Activated CD4-positive, alpha-beta T cell treated with anti-CD3 and anti-CD28 coated beads, Interleukin-2, amount 10 ng/mL, durations not matched to agents 24 days and 14 days (primary cell): ENCODE measurements at regions of chr11 and their contacts with region 1.

Region 1: DNA sequence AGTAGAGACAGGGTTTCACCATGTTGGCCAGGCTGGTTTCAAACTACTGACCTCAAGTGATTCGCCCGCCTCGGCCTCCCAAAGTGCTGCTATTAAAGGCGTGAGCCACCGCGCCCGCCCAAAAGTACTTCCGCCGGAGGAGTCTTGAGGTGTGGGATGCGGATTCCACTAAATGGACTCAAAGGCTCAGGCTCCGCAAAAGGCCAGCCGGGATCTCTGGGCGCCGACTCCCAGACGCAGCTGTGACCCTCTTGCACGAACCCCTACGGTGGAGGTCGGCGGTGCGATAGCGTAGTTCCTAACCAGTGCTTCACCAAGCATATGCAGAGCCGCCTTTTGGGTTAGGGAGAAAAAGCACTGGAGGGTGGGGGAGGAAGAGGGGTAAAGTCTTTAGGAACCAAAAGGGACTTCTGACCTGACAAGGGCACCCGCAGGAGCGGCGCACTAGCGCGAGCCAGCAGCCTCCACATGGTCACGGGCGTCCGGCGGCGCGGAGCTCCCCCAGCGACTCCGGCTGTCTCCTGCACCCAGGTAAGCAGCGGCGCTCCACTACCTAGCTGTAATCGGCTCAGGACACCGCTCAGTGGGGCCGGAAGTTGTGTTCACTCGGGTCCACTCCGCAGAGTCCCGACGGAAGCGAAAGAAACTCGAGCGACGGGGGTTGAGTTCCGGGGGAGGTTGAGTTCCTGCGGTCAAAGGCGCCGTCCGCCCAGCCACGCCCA is at the start of gene MRPL16:
- DNase-seq: peak; percentile 95
- H3K4me3 Mint-ChIP-seq: peak within 1 kb of the TSS; percentile 92
- H3K27ac Mint-ChIP-seq: peak within 1 kb of the TSS; percentile 91
- H3K4me1 Mint-ChIP-seq: peaks cover 22% of the 10 kb centered on the region
- H3K27me3 Mint-ChIP-seq: no peaks in the 10 kb centered on the region
- total RNA-seq, gene MRPL16: 96.8 and 97.4 TPM in 2 replicates

Region 2: DNA sequence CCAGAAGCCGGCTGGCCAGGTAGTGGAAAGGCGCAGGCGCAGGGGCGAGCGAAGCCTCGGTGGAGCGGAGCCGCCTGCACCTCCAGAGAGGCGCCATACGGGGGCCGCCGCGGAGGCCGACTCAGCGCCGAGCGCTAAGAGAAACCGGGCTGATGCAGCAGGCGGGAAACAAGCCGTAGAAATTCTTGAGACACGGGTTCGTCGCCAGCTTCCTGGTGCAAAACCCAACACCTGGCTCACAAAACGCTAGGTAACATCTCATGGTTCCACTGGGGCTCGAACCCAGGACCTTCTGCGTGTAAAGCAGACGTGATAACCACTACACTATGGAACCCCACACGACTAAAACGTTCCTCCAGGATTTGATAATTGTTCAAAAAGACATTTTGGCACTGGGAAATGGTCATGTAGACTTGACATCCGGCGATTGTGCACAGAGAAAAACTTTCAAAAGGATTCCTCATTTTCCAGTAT is 259.9 kb before region 1 on chr11:
- intact Hi-C with region 1: loop called (anchors 5 kb)
- DNase-seq: peak; percentile 95
- H3K4me3 Mint-ChIP-seq: peak overlapping the region; percentile 85
- H3K27ac Mint-ChIP-seq: peak overlapping the region; percentile 88
- H3K4me1 Mint-ChIP-seq: peaks cover 22% of the 10 kb centered on the region
- H3K27me3 Mint-ChIP-seq: peaks cover 15% of the 10 kb centered on the region

Region 3: DNA sequence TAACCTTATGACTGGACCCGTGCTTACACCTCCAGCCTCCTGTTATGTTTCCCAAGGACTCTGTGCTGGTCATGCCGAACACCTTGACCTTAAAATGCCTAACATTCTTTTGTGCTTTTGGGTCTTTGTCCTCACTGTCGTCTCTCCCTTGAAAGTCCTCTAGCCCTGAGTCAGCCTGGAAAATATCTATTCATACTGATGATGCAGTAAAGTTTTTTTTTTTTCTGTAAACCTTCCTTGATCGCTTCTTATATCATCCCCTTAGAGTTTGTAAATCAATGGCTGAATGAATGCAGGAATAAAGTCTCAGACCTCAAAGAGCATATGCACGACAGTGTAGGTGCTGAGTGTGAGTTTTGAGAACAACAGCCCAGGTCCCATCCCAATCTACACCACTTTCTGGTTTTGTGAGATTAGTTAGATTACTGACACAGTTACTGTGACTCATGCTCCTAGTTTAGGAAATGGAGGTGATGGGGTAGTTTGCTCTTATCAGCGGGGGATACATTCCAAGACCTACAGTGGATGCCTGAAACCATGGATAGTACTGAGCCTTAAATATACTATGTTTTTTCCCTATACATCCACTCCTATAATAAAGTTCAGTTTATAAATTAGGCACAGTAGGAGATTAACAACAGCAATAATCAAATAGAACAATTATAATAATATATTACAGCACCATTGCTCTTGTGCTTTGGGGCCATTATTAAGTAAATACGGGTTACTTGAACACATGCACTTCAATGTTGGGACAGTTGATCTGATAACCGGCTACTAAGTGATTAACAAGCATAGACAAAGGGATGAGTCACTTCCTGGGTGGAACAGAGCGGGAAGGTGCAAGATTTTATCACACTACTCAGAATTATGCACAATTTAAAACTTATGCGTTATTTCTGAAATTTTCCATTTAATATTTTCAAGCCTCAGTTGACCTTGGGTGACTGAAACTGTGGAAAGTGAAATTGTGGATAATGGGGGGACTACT is 47.4 kb after region 1 on chr11:
- intact Hi-C with region 1: loop called (anchors 5 kb)
- DNase-seq: peak; percentile 67
- H3K4me3 Mint-ChIP-seq: peak overlapping the region; percentile 55
- H3K27ac Mint-ChIP-seq: peak overlapping the region; percentile 88
- H3K4me1 Mint-ChIP-seq: peaks cover 20% of the 10 kb centered on the region
- H3K27me3 Mint-ChIP-seq: peaks cover 1% of the 10 kb centered on the region